PC-9 (cell line): ENCODE measurements at regions of chr17 and their contacts with region 1.

Region 1: DNA sequence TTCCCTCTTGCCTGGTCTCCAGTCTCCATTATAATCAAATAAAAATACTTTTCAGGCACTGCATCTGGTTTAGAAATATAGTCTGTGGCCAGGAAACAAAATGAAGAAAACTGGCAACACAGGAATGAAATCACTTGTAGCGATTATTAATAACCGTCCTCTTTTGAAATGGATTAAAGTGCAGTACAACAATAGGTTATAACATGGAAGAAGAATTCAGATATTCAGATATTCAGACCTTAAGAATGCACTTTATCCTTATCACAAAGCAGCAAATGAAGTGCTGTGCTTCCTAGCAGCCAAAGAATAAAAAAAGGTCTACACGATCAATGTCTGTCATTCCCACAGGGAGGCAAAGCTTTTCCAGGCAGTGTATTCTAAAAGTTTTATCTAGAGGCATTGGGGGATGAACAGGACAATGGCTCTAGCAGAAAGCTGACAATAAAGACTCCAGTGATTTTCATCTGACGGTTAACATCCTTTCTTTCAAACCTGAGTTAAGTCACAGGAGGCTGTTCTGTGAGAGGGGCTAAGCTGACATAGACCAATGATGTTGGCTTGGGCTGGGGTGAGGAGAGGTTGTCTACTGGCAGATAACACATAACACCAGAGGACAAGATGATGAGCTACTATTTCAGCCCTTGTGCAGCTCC is 259.2 kb downstream of the SLC39A11 start:
- DNase-seq: no peak
- H3K4me3 ChIP-seq: no peak overlapping the region
- H3K27ac ChIP-seq: no peak overlapping the region
- H3K4me1 ChIP-seq: no peaks in the 10 kb centered on the region
- H3K27me3 ChIP-seq: no peaks in the 10 kb centered on the region
- CTCF ChIP-seq: no peak

Region 2: DNA sequence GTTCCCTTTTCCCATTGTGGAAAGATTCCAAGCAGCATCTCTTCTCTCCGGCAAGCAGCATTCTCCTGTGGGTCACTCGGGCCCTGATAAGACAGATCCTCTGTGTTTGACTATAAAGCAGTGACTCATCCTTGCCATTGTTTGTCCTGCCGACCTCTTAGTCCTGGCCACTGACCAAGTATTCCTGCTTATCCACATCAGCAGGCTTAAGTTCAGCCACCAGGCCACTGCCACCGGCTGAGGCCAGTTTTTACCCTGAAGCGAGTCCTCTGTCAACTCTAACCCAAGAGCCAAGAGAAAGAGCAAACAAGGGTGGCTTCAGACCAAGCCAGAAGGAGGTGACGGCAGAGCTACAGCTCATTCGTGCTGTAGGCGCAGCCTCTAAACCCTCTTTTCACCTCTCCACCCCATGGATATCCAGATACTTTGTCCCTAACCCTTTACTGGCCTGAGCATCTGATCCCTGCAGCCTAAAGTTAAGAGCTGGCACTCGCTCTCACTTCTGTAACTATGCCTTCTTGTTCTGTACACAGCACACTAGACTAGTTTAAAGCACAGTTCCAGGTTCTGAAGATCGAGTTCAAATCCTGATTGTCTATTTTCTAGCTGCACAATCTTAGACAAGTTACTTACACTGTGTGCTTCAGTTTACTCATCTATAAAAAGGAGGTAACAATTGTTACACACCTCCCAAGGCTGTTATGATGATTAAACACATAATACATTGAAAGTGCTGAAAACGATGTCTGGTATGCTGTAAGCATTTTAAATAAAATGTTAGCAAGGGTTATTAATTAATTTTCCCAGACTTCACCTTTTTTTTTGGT is 681.5 kb before region 1 on chr17:
- CTCF ChIA-PET with region 1: interaction called, 13 read pairs
- POLR2A ChIA-PET with region 1: no interaction called
- intact Hi-C with region 1: no loop called
- DNase-seq: peak; percentile 86 to 99
- H3K4me3 ChIP-seq: peak overlapping the region; percentile 38; the same call in 1 of the 2 replicates
- H3K27ac ChIP-seq: peak overlapping the region; percentile 92
- H3K4me1 ChIP-seq: peaks cover 36% of the 10 kb centered on the region
- H3K27me3 ChIP-seq: no peaks in the 10 kb centered on the region
- CTCF ChIP-seq: no peak

Region 3: GRCh38 chr17:72976971-72977770 is 143.9 kb after region 1 on chr17:
- CTCF ChIA-PET with region 1: no interaction called
- POLR2A ChIA-PET with region 1: interaction called, 19 read pairs
- intact Hi-C with region 1: no loop called
- DNase-seq: peak; percentile 71 to 84
- H3K4me3 ChIP-seq: peak overlapping the region; percentile 44
- H3K27ac ChIP-seq: peak overlapping the region; percentile 96
- H3K4me1 ChIP-seq: peaks cover 47% of the 10 kb centered on the region
- H3K27me3 ChIP-seq: no peaks in the 10 kb centered on the region
- CTCF ChIP-seq: no peak

Region 4: GRCh38 chr17:73166731-73167581 is 333.7 kb after region 1 on chr17:
- CTCF ChIA-PET with region 1: no interaction called
- POLR2A ChIA-PET with region 1: no interaction called
- intact Hi-C with region 1: no loop called
- DNase-seq: no peak
- H3K4me3 ChIP-seq: peak overlapping the region; percentile 47; the same call in 1 of the 2 replicates
- H3K27ac ChIP-seq: no peak overlapping the region
- H3K4me1 ChIP-seq: 0 out of 2 replicates have a peak, but pooled peaks cover 5% of the 10 kb centered on the region
- H3K27me3 ChIP-seq: peaks cover 34% of the 10 kb centered on the region; the same call in 1 of the 2 replicates
- CTCF ChIP-seq: no peak